HEK293T (cell line): ENCODE measurements at regions of chr1 and their contacts with region 1.

Region 1: GRCh38 chr1:8962812-8963530 is 17.3 kb downstream of the CA6 start:
- DNase-seq: peak; percentile 76

Region 2: DNA sequence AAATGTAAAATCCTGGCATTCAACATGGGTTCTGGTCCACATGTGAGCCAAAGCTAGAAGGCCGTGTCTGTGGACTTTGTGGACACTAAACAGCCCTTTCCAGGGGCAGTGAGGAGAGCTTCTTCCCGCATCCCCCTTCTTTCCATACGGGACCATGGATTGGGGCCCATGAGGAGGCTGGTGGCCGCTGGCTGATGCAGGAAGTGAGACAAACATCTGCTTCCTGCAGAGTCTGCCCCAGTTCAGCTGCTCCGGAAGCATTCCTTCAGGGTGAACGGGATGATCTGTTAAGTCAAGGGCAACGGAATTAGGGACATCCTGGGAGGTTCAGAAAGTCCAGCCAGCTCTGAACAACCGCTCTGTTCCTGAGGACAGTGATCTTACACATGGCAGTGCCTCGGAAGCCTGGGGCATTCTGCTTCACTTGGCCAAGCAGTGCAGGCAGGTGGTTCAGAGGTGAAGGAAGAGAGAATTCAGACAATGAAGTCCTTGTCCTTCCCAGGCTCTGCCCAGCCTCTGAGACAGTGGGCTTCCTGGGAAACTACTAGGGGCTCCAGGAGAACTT is 15.8 kb before region 1 on chr1:
- CTCF ChIA-PET with region 1: interaction called, 10 read pairs
- POLR2A ChIA-PET with region 1: no interaction called
- DNase-seq: no peak

Region 3: GRCh38 chr1:8985915-8986813 is 23.2 kb after region 1 on chr1:
- CTCF ChIA-PET with region 1: interaction called, 13 read pairs
- POLR2A ChIA-PET with region 1: no interaction called
- DNase-seq: no peak

Region 4: DNA sequence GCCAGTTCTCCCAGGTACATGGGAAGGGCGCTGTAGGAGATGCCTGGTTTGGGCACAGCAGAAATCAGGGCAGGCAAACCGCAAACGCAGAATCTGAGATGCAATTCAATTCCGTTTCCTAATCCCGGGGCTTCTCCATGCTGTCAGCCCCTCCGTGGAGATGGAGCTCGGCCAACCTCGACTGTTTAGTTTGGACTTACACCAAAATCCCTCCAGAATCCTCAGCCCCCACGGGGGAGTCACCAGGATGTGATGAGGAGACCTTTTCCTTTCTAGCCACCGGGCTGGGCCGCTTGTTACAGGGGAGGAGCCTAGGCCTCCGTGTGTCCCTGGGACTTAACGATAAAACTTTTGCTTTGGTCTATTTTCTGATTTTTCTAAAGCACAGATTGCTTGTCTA is 55.4 kb after region 1 on chr1:
- CTCF ChIA-PET with region 1: no interaction called
- POLR2A ChIA-PET with region 1: no interaction called
- DNase-seq: no peak

Region 5: GRCh38 chr1:9037476-9038337 is 74.7 kb after region 1 on chr1:
- CTCF ChIA-PET with region 1: no interaction called
- POLR2A ChIA-PET with region 1: no interaction called
- DNase-seq: no peak